Activated CD4-positive, alpha-beta memory T cell treated with anti-CD3 and anti-CD28 coated beads, Interleukin-2, amount 10 ng/mL, durations not matched to agents 7 days and 5 days (primary cell): ENCODE measurements at regions of chr6 and their contacts with region 1.

Region 1: DNA sequence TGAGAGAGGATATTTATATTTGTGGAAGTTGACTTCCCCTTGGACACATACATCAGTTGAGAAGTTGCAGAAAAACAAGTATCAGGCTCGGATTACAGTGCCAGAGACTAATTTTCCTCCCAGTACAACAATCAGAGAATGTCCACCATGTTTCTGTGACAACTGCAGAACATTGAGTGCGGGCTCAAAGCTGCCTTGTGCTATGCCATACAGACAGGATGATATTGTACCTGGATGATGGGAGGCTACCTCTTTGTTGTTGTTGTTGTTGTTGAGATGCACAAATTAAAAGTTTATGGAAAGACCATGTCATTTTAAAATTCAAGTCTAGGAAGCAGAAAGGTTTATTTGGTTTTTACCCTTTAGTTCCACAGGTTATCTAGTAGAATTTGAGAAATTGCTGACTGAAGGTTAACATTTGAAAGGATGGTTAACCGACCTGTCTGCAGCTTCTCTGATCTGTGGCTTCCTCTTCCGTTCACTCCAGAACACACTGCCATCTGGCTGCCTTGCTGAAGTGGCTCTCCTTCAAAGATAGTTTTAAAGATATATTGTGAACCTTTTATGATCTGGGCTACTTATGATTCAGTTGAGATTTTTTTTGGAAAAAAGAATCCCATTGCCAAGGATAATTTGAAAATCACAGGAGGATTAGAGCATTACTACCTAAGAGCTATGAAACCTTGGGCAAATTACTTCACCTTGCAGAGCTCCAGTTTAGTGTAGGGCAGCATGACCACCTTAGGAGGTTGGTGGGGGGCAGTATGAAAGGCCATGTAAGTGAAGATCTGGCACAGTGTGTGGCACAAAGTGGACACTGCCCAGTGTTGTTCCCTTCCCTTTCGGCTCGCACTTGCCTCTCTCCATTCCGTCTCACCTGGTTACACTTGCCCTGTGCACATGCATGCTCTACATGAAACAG is 15.9 kb downstream of the TMEM200A start:
- DNase-seq: peak; percentile 59
- H3K4me3 Mint-ChIP-seq: no peak overlapping the region
- H3K27ac Mint-ChIP-seq: peak overlapping the region; percentile 11
- H3K4me1 Mint-ChIP-seq: peaks cover 23% of the 10 kb centered on the region
- H3K27me3 Mint-ChIP-seq: no peaks in the 10 kb centered on the region

Region 2: GRCh38 chr6:130365166-130366106 is 16.3 kb before region 1 on chr6 and contains the start of gene TMEM200A:
- CTCF ChIA-PET with region 1: interaction called, 20 read pairs
- POLR2A ChIA-PET with region 1: interaction called, 3 read pairs
- DNase-seq: peak; percentile 54
- H3K4me3 Mint-ChIP-seq: peak within 1 kb of the TSS; percentile 74
- H3K27ac Mint-ChIP-seq: peak within 1 kb of the TSS; percentile 23
- H3K4me1 Mint-ChIP-seq: peaks cover 21% of the 10 kb centered on the region
- H3K27me3 Mint-ChIP-seq: peaks cover 27% of the 10 kb centered on the region
- total RNA-seq, gene TMEM200A: 3.0 TPM

Region 3: GRCh38 chr6:130396722-130397121 is 15.0 kb after region 1 on chr6:
- CTCF ChIA-PET with region 1: interaction called, 25 read pairs
- POLR2A ChIA-PET with region 1: interaction called, 10 read pairs
- DNase-seq: no peak
- H3K4me3 Mint-ChIP-seq: peak overlapping the region; percentile 54
- H3K27ac Mint-ChIP-seq: no peak overlapping the region
- H3K4me1 Mint-ChIP-seq: peaks cover 14% of the 10 kb centered on the region
- H3K27me3 Mint-ChIP-seq: no peaks in the 10 kb centered on the region

Region 4: DNA sequence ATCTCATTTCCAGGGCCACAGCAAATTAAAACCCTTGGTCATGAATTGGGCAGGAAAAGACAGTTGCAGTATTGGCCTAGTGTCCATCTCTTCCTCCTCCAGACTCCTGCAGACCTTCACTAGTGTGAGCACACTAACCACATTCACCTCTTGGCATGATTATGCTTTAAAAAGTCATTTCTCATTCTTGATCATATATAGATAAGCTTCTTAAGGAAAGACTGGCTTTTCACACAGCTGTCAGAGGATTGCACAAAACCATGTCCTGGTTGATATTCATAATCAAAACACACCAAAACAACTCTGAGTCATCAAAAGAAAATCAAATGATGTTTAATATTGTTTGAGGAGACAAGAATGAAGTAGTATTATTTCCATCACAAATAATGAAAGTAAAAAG is 36.2 kb after region 1 on chr6:
- CTCF ChIA-PET with region 1: no interaction called
- POLR2A ChIA-PET with region 1: no interaction called
- DNase-seq: no peak
- H3K4me3 Mint-ChIP-seq: no peak overlapping the region
- H3K27ac Mint-ChIP-seq: no peak overlapping the region
- H3K4me1 Mint-ChIP-seq: peaks cover 4% of the 10 kb centered on the region
- H3K27me3 Mint-ChIP-seq: no peaks in the 10 kb centered on the region

Region 5: DNA sequence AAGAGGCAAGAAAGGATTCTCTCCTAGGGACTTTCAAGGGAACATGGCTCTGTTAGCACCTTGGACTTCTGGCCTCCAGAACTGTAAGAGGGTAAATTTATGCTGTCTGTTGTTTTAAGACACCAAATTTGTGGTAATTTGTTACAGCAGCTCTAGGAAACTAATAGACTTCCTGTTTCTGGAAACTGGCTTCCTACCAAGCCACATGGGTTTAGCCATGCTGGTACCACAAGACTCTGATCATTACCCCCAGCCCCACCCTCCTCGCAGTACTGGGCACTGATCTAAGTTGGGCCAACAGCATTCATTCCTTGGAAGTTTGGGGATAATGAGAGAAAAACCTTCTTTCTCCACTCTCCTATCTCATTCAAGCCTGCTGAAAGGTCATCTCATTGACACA is 335.9 kb after region 1 on chr6:
- CTCF ChIA-PET with region 1: no interaction called
- POLR2A ChIA-PET with region 1: no interaction called
- DNase-seq: peak; percentile 31
- H3K4me3 Mint-ChIP-seq: no peak overlapping the region
- H3K27ac Mint-ChIP-seq: peak overlapping the region; percentile 67
- H3K4me1 Mint-ChIP-seq: peaks cover 49% of the 10 kb centered on the region
- H3K27me3 Mint-ChIP-seq: no peaks in the 10 kb centered on the region

Region 6: DNA sequence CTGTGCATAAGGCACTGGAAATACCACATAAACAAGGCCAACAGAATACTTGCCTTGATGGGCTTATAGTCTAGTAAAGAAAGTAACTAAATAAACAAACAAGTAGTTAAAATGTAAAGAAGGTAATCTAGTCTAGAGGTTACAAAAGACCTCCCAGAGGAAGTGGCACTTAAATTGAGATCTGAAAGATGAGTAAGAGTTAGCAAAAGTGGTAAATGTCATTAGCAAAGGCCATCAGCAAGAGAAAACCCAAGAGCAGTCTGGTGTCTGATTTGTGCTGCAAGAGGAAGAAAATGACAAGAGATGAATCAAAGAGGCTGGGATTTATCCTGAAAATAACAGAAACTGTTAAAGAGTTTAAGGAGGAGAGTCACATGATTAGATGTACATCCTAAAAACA is 348.9 kb after region 1 on chr6:
- CTCF ChIA-PET with region 1: no interaction called
- POLR2A ChIA-PET with region 1: no interaction called
- DNase-seq: no peak
- H3K4me3 Mint-ChIP-seq: no peak overlapping the region
- H3K27ac Mint-ChIP-seq: peak overlapping the region; percentile 8
- H3K4me1 Mint-ChIP-seq: peaks cover 15% of the 10 kb centered on the region
- H3K27me3 Mint-ChIP-seq: no peaks in the 10 kb centered on the region